Activated B cell treated with CpG ODN at 0.5 μM for 24 hours (primary cell): ENCODE measurements at regions of chr19 and their contacts with region 1.

Region 1: GRCh38 chr19:55301459-55302317 is 17.9 kb downstream of the BRSK1 start:
- DNase-seq: peak; percentile 95
- ATAC-seq: peak; percentile 91
- H3K4me3 Mint-ChIP-seq: peak overlapping the region; percentile 75
- H3K27ac Mint-ChIP-seq: peak overlapping the region; percentile 37
- H3K4me1 Mint-ChIP-seq: peaks cover 8% of the 10 kb centered on the region
- H3K27me3 Mint-ChIP-seq: no peaks in the 10 kb centered on the region
- CTCF ChIP-seq: peak; percentile 90

Region 2: DNA sequence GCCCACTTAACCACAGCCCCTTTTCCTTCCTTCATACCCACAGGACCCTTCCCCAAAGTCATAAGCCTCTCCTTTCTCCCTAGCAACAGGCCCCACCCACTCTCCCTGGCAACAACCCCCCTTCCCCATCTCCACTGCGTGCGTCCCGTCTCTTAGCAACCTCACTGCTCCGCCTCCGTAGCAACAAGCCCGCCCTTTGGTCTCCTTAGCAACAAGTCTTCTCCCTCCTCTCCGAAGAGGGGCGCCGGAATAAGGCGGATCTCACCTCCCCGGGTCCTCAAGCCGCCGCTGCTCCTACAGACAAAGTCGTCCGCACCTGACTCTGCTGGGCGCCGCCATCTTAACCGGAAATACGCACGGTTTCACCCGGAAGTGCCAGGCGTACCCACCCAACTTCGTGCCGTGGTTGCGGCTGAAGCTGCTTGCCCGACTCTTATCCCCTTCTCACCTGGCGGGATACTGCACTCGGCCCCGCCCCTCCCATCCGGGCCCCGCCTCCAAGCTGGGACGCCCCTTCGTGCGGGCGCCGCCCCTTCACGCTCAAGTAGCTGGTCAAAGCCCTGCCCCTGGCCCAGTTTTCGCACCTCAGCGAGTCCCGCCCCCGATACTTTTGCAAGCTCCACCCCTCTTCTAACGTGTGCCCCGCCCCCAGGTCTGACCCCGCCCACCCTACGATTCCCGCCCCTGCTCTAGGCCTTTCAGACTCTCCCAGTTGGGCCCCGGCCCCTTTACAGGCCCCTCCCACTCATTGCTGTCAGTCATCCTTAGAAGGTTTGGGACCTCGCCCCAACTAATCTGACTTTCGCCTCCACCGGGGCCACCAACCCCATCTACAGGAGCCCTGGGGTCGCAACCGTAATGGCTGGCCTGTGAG is 21.7 kb before region 1 on chr19 and contains the start of gene HSPBP1:
- CTCF ChIA-PET with region 1: interaction called, 3 read pairs
- POLR2A ChIA-PET with region 1: interaction called, 5 read pairs
- intact Hi-C with region 1: loop called (anchors 2 kb)
- DNase-seq: peak; percentile 97
- ATAC-seq: peak; percentile 83
- H3K4me3 Mint-ChIP-seq: peak within 1 kb of the TSS; percentile 100
- H3K27ac Mint-ChIP-seq: peak within 1 kb of the TSS; percentile 98
- H3K4me1 Mint-ChIP-seq: peaks cover 73% of the 10 kb centered on the region
- H3K27me3 Mint-ChIP-seq: peaks cover 4% of the 10 kb centered on the region
- CTCF ChIP-seq: no peak
- total RNA-seq, gene HSPBP1: 32.2 and 32.9 TPM in 2 replicates

Region 3: GRCh38 chr19:55312621-55313512 is 11.2 kb after region 1 on chr19:
- CTCF ChIA-PET with region 1: no interaction called
- POLR2A ChIA-PET with region 1: no interaction called
- intact Hi-C with region 1: no loop called
- DNase-seq: no peak
- ATAC-seq: no peak
- H3K4me3 Mint-ChIP-seq: no peak overlapping the region
- H3K27ac Mint-ChIP-seq: no peak overlapping the region
- H3K4me1 Mint-ChIP-seq: no peaks in the 10 kb centered on the region
- H3K27me3 Mint-ChIP-seq: no peaks in the 10 kb centered on the region
- CTCF ChIP-seq: no peak

Region 4: GRCh38 chr19:55339048-55339888 is 37.6 kb after region 1 on chr19 and contains the start of gene KMT5C:
- CTCF ChIA-PET with region 1: interaction called, 11 read pairs
- POLR2A ChIA-PET with region 1: interaction called, 10 read pairs
- intact Hi-C with region 1: loop called (anchors 1 kb)
- DNase-seq: peak; percentile 99
- ATAC-seq: peak; percentile 81
- H3K4me3 Mint-ChIP-seq: peak within 1 kb of the TSS; percentile 95
- H3K27ac Mint-ChIP-seq: peak within 1 kb of the TSS; percentile 90
- H3K4me1 Mint-ChIP-seq: peaks cover 31% of the 10 kb centered on the region
- H3K27me3 Mint-ChIP-seq: peaks cover 7% of the 10 kb centered on the region
- CTCF ChIP-seq: no peak
- total RNA-seq, gene KMT5C: 7.2 and 8.1 TPM in 2 replicates

Region 5: GRCh38 chr19:55418185-55418584 is 116.5 kb after region 1 on chr19:
- CTCF ChIA-PET with region 1: interaction called, 4 read pairs
- POLR2A ChIA-PET with region 1: no interaction called
- intact Hi-C with region 1: loop called (anchors 1 kb)
- DNase-seq: no peak
- ATAC-seq: peak; percentile 62
- H3K4me3 Mint-ChIP-seq: no peak overlapping the region
- H3K27ac Mint-ChIP-seq: no peak overlapping the region
- H3K4me1 Mint-ChIP-seq: peaks cover 3% of the 10 kb centered on the region
- H3K27me3 Mint-ChIP-seq: peaks cover 23% of the 10 kb centered on the region
- CTCF ChIP-seq: no peak